ENCODE measurements at regions of chr2 and their contacts with region 1.

Region 1: DNA sequence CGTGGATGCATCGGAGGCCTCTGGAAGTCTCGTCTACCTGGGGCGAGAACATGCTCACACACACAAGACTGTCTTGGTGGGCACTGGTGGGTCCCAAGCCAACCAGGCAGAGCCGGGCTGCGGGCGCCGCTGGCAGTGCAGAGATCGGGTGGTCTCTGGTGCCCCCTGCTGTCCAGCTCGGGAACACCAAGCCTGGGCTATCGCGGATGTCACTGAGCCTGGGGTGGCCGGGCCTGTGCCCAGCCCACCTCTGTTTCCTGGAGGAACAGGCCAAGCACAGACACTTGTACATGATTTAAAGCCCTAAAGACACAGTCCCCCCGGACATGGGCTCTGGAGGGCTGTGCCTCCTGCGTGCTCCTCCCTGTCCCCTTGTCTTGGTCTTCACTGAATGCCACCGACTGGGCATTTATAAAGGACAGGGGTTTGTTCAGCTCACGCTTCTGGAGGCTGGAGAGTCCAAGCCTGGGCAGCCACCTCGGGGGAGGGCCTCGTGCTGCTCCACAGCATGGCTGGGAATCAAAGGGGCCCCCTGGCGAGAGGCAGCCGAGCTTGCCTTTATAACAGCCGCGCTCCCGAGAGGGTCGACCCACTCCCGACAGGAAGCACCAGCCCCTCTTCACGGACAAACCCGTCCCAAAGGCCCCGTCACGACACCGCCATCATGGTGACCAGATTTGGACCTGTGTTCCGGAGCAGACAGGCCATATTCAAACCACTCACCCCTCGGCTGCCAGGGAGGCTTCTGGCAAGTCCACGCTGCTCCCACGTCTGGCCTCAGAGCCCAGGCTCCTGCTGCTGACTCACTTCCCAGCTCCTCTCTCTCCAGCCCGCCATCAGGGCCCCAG is 3.6 kb upstream of the OTOS start:
- DNase-seq: peak; percentile 81 to 88
- ATAC-seq: peak; percentile 86 to 99 (median 98)
- H3K4me3 ChIP-seq: no peak overlapping the region
- H3K4me3 Mint-ChIP-seq: no peak overlapping the region
- H3K27ac ChIP-seq: no peak overlapping the region
- H3K27ac Mint-ChIP-seq: no peak overlapping the region
- H3K4me1 ChIP-seq: peaks cover 2% of the 10 kb centered on the region
- H3K4me1 Mint-ChIP-seq: peaks cover 0 to 8% of the 10 kb centered on the region in 2 donors
- H3K27me3 ChIP-seq: no peaks in the 10 kb centered on the region
- H3K27me3 Mint-ChIP-seq: no peaks in the 10 kb centered on the region
- CTCF ChIP-seq: peak; percentile 90

Region 2: GRCh38 chr2:240060977-240061591 is 82.9 kb before region 1 on chr2:
- intact Hi-C with region 1: loop called (anchors 1 kb)
- DNase-seq: peak in 1 of 2 donors; percentile 75
- ATAC-seq: peak; percentile 44 to 74 (median 64)
- H3K4me3 ChIP-seq: no peak overlapping the region
- H3K4me3 Mint-ChIP-seq: no peak overlapping the region
- H3K27ac ChIP-seq: no peak overlapping the region
- H3K27ac Mint-ChIP-seq: no peak overlapping the region
- H3K4me1 ChIP-seq: no peaks in the 10 kb centered on the region
- H3K4me1 Mint-ChIP-seq: no peaks in the 10 kb centered on the region
- H3K27me3 ChIP-seq: no peaks in the 10 kb centered on the region
- H3K27me3 Mint-ChIP-seq: peaks cover 14 to 54% of the 10 kb centered on the region in 2 donors
- CTCF ChIP-seq: peak; percentile 54

Region 3: GRCh38 chr2:240179941-240180666 is 36.1 kb after region 1 on chr2:
- intact Hi-C with region 1: no loop called
- DNase-seq: no peak
- ATAC-seq: no peak
- H3K4me3 ChIP-seq: no peak overlapping the region
- H3K4me3 Mint-ChIP-seq: no peak overlapping the region
- H3K27ac ChIP-seq: no peak overlapping the region
- H3K27ac Mint-ChIP-seq: no peak overlapping the region
- H3K4me1 ChIP-seq: no peaks in the 10 kb centered on the region
- H3K4me1 Mint-ChIP-seq: no peaks in the 10 kb centered on the region
- H3K27me3 ChIP-seq: no peaks in the 10 kb centered on the region
- H3K27me3 Mint-ChIP-seq: peaks cover 16 to 40% of the 10 kb centered on the region in 2 donors
- CTCF ChIP-seq: no peak

Region 4: DNA sequence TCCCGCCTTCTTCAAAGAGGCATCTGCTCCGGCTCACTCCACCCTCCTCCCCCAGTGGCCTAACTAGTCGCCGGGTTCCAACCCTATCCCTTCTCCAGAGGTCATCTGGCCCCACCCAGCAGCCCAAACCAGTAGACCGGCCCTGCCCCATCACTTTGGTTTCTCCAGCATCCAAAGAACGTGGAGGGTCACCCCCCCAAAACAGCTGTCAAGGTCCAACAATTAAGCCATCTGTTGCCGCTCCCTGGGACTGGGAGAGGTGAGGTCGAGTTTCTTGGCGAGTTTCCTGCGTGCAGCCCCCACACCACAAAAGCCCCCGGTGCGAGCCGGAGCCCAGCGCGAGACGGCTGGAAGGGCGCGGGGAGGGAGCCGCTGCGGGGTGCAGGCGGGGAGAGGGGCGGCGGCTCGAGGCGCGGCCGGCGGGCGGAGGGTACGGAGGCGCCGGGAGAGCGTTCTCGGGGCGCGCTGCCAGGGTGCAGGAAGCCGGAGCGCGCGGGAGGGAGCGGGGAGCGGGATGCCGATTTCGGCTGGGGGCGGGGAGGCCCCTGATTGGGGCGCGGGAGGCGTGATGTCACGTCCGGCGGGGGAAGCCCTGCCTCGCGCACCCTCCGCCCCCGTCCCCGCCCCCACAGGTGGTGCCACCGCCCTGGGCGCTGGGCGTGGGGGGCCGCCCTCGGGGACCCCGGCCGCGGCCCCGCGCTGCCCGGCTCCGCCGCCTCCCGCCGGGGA is 290.9 kb after region 1 on chr2:
- intact Hi-C with region 1: no loop called
- DNase-seq: peak; percentile 67 to 92
- ATAC-seq: peak; percentile 80 to 85 (median 84)
- H3K4me3 ChIP-seq: peak overlapping the region; percentile 24
- H3K4me3 Mint-ChIP-seq: peak overlapping the region; percentile 86
- H3K27ac ChIP-seq: no peak overlapping the region
- H3K27ac Mint-ChIP-seq: peak overlapping the region in 1 of 2 donors; percentile 13
- H3K4me1 ChIP-seq: peaks cover 17% of the 10 kb centered on the region
- H3K4me1 Mint-ChIP-seq: peaks cover 0 to 13% of the 10 kb centered on the region in 2 donors
- H3K27me3 ChIP-seq: peaks cover 21% of the 10 kb centered on the region
- H3K27me3 Mint-ChIP-seq: peaks cover 13 to 16% of the 10 kb centered on the region in 2 donors
- CTCF ChIP-seq: no peak

Region 5: GRCh38 chr2:240739797-240740196 is 595.8 kb after region 1 on chr2:
- intact Hi-C with region 1: no loop called
- DNase-seq: peak in 1 of 2 donors; percentile 55
- ATAC-seq: peak in 2 of 3 donors; percentile 55 to 59
- H3K4me3 ChIP-seq: no peak overlapping the region
- H3K4me3 Mint-ChIP-seq: no peak overlapping the region
- H3K27ac ChIP-seq: no peak overlapping the region
- H3K27ac Mint-ChIP-seq: no peak overlapping the region
- H3K4me1 ChIP-seq: no peaks in the 10 kb centered on the region
- H3K4me1 Mint-ChIP-seq: peaks cover 0 to 8% of the 10 kb centered on the region in 2 donors
- H3K27me3 ChIP-seq: no peaks in the 10 kb centered on the region
- H3K27me3 Mint-ChIP-seq: no peaks in the 10 kb centered on the region
- CTCF ChIP-seq: no peak